ENCODE measurements at regions of chr20 and their contacts with region 1.

Region 1: GRCh38 chr20:4082406-4083097 is 67.2 kb upstream of the RNF24 start:
- DNase-seq: no peak
- H3K4me3 ChIP-seq: peak overlapping the region; percentile 2; the same call in 1 of the 2 replicates
- CTCF ChIP-seq: no peak

Region 2: DNA sequence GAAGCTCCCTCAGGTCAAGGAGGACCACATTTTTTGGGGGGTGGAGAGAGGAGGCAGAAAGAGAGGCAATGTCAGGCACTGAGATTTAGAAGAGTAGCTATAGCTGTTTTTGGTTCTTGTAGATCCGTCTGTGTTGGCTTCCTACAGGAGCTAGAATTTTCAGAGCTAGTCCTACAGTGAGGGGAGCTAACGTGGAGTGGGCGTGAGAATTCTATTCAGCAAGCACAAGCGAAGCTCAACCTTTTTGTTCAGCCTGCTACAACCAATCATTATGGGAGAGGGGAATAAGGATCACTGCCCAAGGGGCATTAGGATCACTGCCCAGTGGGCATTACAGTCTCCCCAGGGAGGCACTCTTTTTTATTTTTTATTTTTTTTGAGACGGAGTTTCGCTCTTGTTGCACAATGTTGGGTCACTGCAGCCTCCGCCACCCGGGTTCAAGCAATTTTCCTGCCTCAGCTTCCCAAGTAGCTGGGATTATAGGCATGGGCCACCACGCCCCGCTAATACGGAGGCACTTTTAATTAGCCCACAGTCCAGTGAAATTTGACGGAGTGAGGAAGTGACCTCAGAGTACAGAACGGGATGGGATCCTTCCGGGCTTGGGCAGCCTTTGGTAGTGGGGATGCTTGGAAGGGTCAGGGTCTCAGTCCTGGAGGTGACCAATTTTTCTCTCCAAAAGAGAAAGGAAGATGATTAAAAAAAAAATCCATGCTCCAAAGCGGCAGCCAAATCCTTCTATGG is 194.5 kb before region 1 on chr20:
- CTCF ChIA-PET with region 1: interaction called, 13 read pairs
- POLR2A ChIA-PET with region 1: no interaction called
- DNase-seq: no peak
- H3K4me3 ChIP-seq: peak overlapping the region; percentile 98
- CTCF ChIP-seq: no peak

Region 3: GRCh38 chr20:4014031-4014474 is 68.5 kb before region 1 on chr20:
- CTCF ChIA-PET with region 1: interaction called, 99 read pairs
- POLR2A ChIA-PET with region 1: no interaction called
- DNase-seq: peak; percentile 28
- H3K4me3 ChIP-seq: peak overlapping the region; percentile 85
- CTCF ChIP-seq: peak; percentile 67

Region 4: DNA sequence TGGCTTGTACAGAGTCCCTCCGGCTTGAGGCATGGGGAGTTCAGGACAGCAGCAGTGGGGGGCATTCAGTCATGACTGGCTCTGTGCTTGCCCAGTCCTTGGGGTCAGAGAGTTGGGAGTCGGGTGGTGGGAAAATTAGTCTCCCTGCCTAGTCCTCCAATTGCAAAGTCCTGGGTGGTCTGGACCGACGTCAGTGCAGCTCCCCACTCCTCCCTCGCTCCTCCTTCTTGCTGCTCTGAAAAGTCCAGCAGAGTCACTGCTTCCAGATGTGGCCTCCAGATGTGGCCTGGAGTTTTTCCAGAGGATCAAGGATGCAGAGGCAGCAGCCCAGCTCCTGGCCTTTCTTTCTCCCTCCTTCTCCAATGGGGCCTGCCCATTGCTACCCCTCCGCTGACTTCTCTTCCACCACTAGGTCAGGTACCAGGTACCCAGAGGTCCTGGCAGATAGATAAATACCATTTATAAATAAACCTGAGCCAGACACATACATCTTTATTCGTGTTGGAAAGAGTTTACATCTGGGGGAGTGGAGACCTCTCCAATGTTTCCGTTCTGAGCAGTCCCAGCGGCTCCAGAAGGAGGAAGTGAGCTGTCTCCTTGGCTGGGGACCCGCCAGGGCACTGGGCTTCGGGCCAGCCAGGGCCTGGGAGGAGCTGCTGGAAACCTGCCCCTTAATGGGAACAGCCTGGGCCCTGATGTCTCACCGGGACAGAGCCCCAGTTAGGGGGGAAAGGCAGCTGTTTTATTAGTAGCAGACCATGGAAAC is 18.2 kb before region 1 on chr20:
- CTCF ChIA-PET with region 1: interaction called, 70 read pairs
- POLR2A ChIA-PET with region 1: interaction called, 3 read pairs
- DNase-seq: no peak
- H3K4me3 ChIP-seq: peak overlapping the region; percentile 18; the same call in 1 of the 2 replicates
- CTCF ChIP-seq: no peak

Region 5: DNA sequence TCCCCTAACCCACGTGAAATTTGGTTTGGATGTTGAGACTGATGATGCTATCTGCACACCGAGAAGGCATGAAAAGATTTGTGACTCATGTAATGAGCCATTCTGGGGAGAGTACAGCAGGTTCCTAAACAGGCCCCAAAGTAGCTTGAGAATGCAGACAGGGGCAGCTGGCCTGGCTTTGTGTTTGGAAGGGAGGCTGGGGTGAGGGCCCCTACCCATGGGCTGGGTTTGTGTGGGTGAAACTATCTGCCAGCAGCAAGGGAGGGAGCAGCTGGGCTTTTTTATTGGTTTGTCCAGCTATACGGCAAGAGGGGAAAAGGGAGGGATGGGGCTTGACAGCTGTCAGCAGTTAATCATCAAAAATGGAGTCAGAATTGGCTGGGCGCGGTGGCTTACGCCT is 19.8 kb after region 1 on chr20:
- CTCF ChIA-PET with region 1: interaction called, 12 read pairs
- POLR2A ChIA-PET with region 1: no interaction called
- DNase-seq: no peak
- H3K4me3 ChIP-seq: no peak overlapping the region
- CTCF ChIP-seq: no peak

Region 6: GRCh38 chr20:4119854-4120209 is 37.3 kb after region 1 on chr20:
- CTCF ChIA-PET with region 1: no interaction called
- POLR2A ChIA-PET with region 1: no interaction called
- DNase-seq: no peak
- H3K4me3 ChIP-seq: no peak overlapping the region
- CTCF ChIP-seq: no peak

Region 7: DNA sequence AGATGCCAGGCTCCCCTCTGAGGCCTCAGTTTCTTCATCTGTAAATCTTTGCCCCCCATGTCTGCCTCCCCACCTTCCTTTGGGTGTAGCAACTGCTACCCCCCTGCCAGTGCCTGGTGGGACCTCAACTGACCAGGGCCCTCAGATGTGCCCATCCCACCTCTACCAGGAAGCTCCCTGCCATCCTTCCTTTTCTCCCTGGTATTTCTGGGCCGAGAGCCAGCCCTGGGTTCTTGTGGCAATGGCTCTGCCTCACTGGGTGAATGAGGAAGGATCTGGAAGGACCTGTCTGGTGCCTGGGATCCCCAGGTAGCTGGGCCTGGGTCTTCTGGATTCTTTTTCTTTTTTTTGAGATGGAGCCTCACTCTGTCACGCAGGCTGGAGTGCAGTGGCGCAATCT is 73.9 kb after region 1 on chr20:
- CTCF ChIA-PET with region 1: no interaction called
- POLR2A ChIA-PET with region 1: no interaction called
- DNase-seq: no peak
- H3K4me3 ChIP-seq: no peak overlapping the region
- CTCF ChIP-seq: no peak